ENCODE measurements at regions of chr22 and their contacts with region 1.

Region 1: GRCh38 chr22:22463855-22464540 is 44.5 kb downstream of the ZNF280B start:
- DNase-seq: peak; percentile 67
- H3K4me3 ChIP-seq: peak overlapping the region in 1 of 2 experiments; percentile 20; a peak in 1 of 4 replicates
- H3K27ac ChIP-seq: no peak overlapping the region
- H3K4me1 ChIP-seq: peaks cover 0 to 2% of the 10 kb centered on the region in 2 experiments; a peak in 1 of 4 replicates
- H3K27me3 ChIP-seq: peaks cover 6% of the 10 kb centered on the region; the same call in 1 of the 2 replicates
- CTCF ChIP-seq: peak; percentile 84
- EP300 ChIP-seq: no peak
- RAD21 ChIP-seq: peak; percentile 93

Region 2: GRCh38 chr22:22123118-22123959 is 340.7 kb before region 1 on chr22:
- CTCF ChIA-PET with region 1: no interaction called
- POLR2A ChIA-PET with region 1: no interaction called
- DNase-seq: no peak
- H3K4me3 ChIP-seq: no peak overlapping the region; a peak in 1 of 4 replicates
- H3K27ac ChIP-seq: no peak overlapping the region
- H3K4me1 ChIP-seq: no peaks in the 10 kb centered on the region
- H3K27me3 ChIP-seq: peaks cover 10% of the 10 kb centered on the region; the same call in 1 of the 2 replicates
- CTCF ChIP-seq: no peak
- EP300 ChIP-seq: no peak
- RAD21 ChIP-seq: no peak

Region 3: DNA sequence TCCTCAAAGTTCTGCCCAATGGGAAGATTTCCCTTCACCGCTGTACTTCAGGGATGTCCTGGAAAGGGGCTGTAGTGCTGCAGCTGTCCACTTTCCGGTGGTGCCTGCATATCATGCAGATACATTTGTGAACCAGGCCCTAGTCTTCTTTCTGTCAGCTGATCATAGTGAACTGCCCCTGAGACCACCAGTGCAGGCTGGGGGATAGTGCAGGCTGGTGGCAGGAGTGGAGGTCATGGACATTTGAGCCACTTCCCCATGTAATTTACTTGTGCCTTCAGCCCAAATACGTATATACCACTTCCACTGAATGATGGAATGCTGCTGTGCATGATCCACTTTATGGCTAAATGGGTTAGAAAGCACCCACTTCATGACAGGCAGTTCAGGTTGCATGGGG is 75.5 kb before region 1 on chr22:
- CTCF ChIA-PET with region 1: no interaction called
- POLR2A ChIA-PET with region 1: no interaction called
- DNase-seq: no peak
- H3K4me3 ChIP-seq: no peak overlapping the region
- H3K27ac ChIP-seq: no peak overlapping the region
- H3K4me1 ChIP-seq: no peaks in the 10 kb centered on the region
- H3K27me3 ChIP-seq: peaks cover 12% of the 10 kb centered on the region
- CTCF ChIP-seq: no peak
- EP300 ChIP-seq: no peak
- RAD21 ChIP-seq: no peak

Region 4: DNA sequence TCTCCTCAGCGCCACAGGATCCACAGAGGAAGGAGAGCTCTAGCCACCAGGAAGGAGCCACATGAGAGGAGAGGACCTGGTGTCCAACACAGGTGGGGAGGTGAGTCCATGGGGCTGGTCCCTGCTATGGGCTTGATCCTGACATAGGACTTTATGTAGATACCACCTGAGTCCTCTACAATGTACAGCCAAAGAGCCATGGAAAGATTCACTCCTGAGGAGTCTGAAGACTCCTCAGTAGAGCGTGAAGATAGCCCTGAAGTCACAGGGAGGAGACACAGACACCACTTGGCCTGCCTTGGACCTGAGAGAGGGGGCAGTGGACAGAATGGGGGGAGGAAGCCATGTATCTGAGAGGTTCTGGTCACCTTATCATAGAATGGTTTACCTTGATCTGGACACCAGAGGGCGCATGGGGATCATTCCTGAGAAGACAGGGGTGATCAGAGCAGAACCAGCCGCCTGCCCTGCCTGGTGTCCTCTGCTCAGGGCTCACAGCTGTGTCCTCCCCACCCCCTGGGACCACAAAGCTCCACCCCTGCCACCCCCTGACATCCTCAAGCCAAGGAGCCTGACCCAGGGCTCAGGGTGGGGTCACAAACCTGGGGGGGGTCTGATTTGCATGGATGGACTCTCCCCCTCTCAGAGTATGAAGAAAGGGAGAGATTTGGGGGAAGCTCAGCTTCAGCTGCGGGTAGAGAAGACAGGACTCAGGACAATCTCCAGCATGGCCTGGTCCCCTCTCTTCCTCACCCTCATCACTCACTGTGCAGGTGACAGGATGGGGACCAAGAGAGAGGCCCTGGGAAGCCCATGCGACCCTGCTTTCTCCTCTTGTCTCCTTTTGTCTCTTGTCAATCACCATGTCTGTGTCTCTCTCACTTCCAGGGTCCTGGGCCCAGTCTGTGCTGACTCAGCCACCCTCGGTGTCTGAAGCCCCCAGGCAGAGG is 32.5 kb before region 1 on chr22:
- CTCF ChIA-PET with region 1: interaction called, 24 read pairs
- POLR2A ChIA-PET with region 1: no interaction called
- DNase-seq: peak; percentile 79
- H3K4me3 ChIP-seq: no peak overlapping the region
- H3K27ac ChIP-seq: no peak overlapping the region
- H3K4me1 ChIP-seq: no peaks in the 10 kb centered on the region
- H3K27me3 ChIP-seq: no peaks in the 10 kb centered on the region; the same call in 1 of the 2 replicates
- CTCF ChIP-seq: peak; percentile 68
- EP300 ChIP-seq: no peak
- RAD21 ChIP-seq: peak; percentile 71

Region 5: DNA sequence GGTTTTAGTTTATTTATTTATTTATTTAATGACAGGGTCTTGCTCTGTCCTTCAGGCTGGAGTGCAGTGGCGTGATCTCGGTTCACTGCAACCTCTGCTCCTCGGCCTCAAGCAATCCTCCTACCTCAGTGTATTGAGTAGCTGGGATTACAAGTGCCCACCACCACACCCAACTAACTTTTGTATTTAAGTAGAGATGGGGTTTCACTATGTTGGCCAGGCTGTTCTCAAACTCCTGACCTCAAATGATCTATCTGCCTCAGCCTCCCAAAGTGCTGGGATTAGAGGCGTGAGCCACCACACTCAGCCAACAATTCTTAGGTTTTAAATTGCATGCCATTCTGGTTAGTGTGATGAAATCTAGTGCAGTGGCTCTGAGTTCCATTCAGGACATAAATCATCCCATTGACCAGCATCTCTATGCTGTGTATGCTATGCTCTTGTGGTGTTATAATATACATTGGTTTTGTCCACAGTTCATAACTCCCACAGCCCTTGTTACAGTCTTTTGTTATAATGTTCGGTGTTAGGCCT is 16.1 kb after region 1 on chr22:
- CTCF ChIA-PET with region 1: interaction called, 20 read pairs
- POLR2A ChIA-PET with region 1: no interaction called
- DNase-seq: no peak
- H3K4me3 ChIP-seq: no peak overlapping the region
- H3K27ac ChIP-seq: no peak overlapping the region
- H3K4me1 ChIP-seq: no peaks in the 10 kb centered on the region
- H3K27me3 ChIP-seq: no peaks in the 10 kb centered on the region
- CTCF ChIP-seq: no peak
- EP300 ChIP-seq: no peak
- RAD21 ChIP-seq: no peak

Region 6: GRCh38 chr22:22534604-22535415 is 70.8 kb after region 1 on chr22:
- CTCF ChIA-PET with region 1: interaction called, 10 read pairs
- POLR2A ChIA-PET with region 1: no interaction called
- DNase-seq: no peak
- H3K4me3 ChIP-seq: no peak overlapping the region
- H3K27ac ChIP-seq: no peak overlapping the region
- H3K4me1 ChIP-seq: no peaks in the 10 kb centered on the region
- H3K27me3 ChIP-seq: no peaks in the 10 kb centered on the region
- CTCF ChIP-seq: no peak
- EP300 ChIP-seq: no peak
- RAD21 ChIP-seq: no peak

Region 7: GRCh38 chr22:22587577-22588188 is 123.7 kb after region 1 on chr22:
- CTCF ChIA-PET with region 1: interaction called, 43 read pairs
- POLR2A ChIA-PET with region 1: no interaction called
- DNase-seq: no peak
- H3K4me3 ChIP-seq: no peak overlapping the region
- H3K27ac ChIP-seq: no peak overlapping the region
- H3K4me1 ChIP-seq: no peaks in the 10 kb centered on the region; a peak in 1 of 4 replicates
- H3K27me3 ChIP-seq: peaks cover 3% of the 10 kb centered on the region; the same call in 1 of the 2 replicates
- CTCF ChIP-seq: no peak
- EP300 ChIP-seq: no peak
- RAD21 ChIP-seq: no peak

Region 8: GRCh38 chr22:22745225-22746060 is 281.4 kb after region 1 on chr22:
- CTCF ChIA-PET with region 1: interaction called, 15 read pairs
- POLR2A ChIA-PET with region 1: no interaction called
- DNase-seq: peak; percentile 28
- H3K4me3 ChIP-seq: no peak overlapping the region
- H3K27ac ChIP-seq: no peak overlapping the region
- H3K4me1 ChIP-seq: no peaks in the 10 kb centered on the region
- H3K27me3 ChIP-seq: no peaks in the 10 kb centered on the region; the same call in 1 of the 2 replicates
- CTCF ChIP-seq: peak; percentile 56
- EP300 ChIP-seq: no peak
- RAD21 ChIP-seq: peak; percentile 52